ENCODE measurements at regions of chr7 and their contacts with region 1.

Region 1: GRCh38 chr7:55280031-55280454 is 85.1 kb upstream of the LANCL2 start:
- H3K4me3 ChIP-seq: no peak overlapping the region
- H3K27ac ChIP-seq: no peak overlapping the region
- H3K4me1 ChIP-seq: no peaks in the 10 kb centered on the region
- CTCF ChIP-seq: peak; percentile 58

Region 2: DNA sequence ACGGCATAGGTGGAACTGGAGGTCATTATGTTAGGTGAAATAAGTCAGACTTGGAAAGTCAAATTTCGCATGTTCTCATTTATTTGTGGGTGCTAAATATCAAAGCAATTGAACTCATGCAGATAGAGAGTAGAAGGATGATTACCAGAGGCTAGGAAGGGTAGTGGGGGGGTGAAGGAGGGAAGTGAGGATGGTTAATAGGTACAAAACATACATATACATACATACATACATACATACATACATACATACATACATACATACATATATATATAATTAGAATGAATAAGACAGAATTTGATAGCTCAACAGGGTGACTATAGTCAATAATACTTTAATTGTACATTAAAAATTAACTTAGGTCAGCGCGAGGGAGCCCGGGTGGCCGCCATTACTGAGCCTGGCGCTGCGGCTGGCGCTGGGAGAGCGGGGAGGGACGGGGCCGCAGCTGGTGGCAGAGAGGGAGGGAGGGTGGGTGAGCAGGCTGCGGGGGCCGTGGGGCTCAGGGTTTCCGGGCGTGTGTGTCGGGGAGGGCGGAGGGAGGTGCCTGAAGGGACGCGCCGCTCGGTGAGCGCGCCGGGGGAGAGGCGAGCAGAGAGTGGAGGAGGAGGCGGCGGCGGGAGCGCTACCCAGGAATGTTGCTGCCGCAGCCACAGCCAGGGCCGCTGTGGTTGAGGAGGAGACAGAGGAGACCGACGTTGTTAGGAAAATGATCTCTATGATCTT is 347.1 kb before region 1 on chr7:
- CTCF ChIA-PET with region 1: no interaction called
- POLR2A ChIA-PET with region 1: no interaction called
- H3K4me3 ChIP-seq: peak overlapping the region; percentile 39
- H3K27ac ChIP-seq: no peak overlapping the region
- H3K4me1 ChIP-seq: no peaks in the 10 kb centered on the region
- CTCF ChIP-seq: no peak

Region 3: DNA sequence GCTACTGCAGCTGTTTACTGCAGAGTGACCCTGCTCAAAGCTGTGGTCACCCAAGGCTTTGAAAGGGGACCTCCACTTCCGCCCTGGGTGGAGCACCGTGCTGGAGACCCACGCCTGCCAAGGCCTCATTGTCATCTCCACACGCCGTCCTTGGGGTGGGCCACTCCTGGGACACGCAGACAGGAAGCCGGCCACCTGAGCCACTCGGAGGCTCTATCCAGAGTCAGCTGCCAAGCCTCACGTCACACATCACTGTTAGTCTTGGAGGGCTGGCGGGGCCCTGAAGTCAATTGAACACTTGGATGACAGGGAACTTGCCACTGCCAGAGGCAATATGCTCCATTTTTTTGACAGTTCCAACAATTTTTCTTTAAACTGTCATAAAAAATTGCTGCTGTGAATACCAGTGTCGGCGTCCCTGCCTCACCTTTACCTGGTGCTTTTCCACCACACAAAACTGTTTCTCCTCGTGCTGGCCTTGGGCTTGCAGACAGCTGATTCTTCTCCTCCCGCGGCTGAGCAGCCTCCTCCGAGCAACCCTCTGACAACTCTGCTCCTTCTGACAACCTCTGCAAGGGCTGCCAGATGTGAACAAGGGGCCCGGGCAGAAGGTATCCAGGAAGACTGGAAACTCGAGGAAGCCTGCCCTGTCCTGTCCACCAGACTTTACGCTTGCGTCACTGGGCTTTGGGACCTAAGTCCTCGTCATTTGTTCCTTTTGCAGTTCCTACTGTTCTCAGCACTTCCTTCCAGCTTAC is 179.3 kb before region 1 on chr7:
- CTCF ChIA-PET with region 1: no interaction called
- POLR2A ChIA-PET with region 1: no interaction called
- H3K4me3 ChIP-seq: no peak overlapping the region
- H3K27ac ChIP-seq: no peak overlapping the region
- H3K4me1 ChIP-seq: peaks cover 9% of the 10 kb centered on the region; the same call in 1 of the 2 replicates
- CTCF ChIP-seq: no peak

Region 4: GRCh38 chr7:55325371-55325792 is 45.3 kb after region 1 on chr7:
- CTCF ChIA-PET with region 1: no interaction called
- POLR2A ChIA-PET with region 1: no interaction called
- H3K4me3 ChIP-seq: no peak overlapping the region
- H3K27ac ChIP-seq: no peak overlapping the region
- H3K4me1 ChIP-seq: no peaks in the 10 kb centered on the region
- CTCF ChIP-seq: no peak

Region 5: GRCh38 chr7:55387062-55387965 is 107.3 kb after region 1 on chr7:
- CTCF ChIA-PET with region 1: no interaction called
- POLR2A ChIA-PET with region 1: no interaction called
- H3K4me3 ChIP-seq: no peak overlapping the region
- H3K27ac ChIP-seq: no peak overlapping the region
- H3K4me1 ChIP-seq: no peaks in the 10 kb centered on the region
- CTCF ChIP-seq: no peak

Region 6: GRCh38 chr7:55415173-55415778 is 135.2 kb after region 1 on chr7:
- CTCF ChIA-PET with region 1: interaction called, 22 read pairs
- POLR2A ChIA-PET with region 1: no interaction called
- H3K4me3 ChIP-seq: no peak overlapping the region
- H3K27ac ChIP-seq: no peak overlapping the region
- H3K4me1 ChIP-seq: no peaks in the 10 kb centered on the region
- CTCF ChIP-seq: no peak